Dorsolateral prefrontal cortex (tissue), 120 donors: ENCODE measurements at regions of chr9 and their contacts with region 1.

Region 1: GRCh38 chr9:19925817-19926503 is 137.1 kb upstream of the SLC24A2 start:
- DNase-seq: peak in 9 of 10 donors; percentile 43 to 83 (median 75)
- H3K4me3 ChIP-seq: peak overlapping the region; percentile 25 to 75 (median 58)
- H3K27ac ChIP-seq: peak overlapping the region in 24 of 59 donors; percentile 17 to 76 (median 46)
- H3K27me3 ChIP-seq: no peaks in the 10 kb centered on the region
- CTCF ChIP-seq: peak; percentile 91 to 99 (median 97)

Region 2: DNA sequence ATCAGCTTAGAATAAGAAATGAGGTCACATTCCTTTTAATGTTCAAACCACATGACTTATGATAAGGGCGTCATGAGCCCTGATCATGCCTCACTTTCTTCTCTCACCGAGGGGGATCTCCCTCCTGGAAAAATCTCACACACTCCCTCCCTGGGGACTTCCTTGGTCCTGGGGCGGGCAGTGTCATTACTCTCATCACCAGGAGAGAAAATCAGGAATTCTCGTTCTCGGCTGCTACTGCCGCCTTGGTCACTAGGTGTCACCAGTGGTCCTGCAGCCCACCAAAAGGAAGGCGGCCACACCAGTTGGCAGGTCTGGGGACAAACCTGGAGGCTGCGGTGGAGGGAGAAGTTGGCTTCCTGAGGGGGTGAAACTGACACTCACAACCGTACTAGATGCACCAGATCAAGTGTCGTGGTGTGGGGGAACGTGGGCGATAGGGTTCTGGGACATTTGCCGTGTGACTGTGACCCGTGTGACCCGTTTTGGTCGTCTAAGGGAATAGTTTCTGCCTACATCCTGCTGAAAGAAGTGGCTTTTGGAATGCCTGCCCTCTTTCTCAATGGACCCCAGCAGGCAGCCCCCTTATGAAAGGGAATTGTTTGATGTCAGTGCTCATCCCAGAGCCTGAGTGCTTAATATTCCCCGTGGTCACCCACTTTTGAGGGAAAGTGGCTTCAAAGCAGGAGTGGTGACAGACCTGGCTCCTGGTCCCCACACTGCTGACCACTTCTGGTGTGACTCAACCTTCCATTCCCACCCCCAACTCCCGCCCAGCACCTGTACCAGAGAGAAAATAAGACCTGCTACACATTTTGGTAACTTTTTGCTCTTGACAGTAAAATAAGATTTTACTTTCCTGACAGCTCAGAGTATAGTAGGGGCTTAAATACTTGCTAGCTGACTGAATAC is 454.0 kb before region 1 on chr9:
- intact Hi-C with region 1: loop called (anchors 2 to 5 kb)
- DNase-seq: peak; percentile 61 to 85 (median 82)
- H3K4me3 ChIP-seq: peak overlapping the region in 24 of 59 donors; percentile 2 to 39 (median 18)
- H3K27ac ChIP-seq: peak overlapping the region; percentile 51 to 98 (median 92)
- H3K27me3 ChIP-seq: no peaks in the 10 kb centered on the region
- CTCF ChIP-seq: peak; percentile 38 to 94 (median 84)

Region 3: DNA sequence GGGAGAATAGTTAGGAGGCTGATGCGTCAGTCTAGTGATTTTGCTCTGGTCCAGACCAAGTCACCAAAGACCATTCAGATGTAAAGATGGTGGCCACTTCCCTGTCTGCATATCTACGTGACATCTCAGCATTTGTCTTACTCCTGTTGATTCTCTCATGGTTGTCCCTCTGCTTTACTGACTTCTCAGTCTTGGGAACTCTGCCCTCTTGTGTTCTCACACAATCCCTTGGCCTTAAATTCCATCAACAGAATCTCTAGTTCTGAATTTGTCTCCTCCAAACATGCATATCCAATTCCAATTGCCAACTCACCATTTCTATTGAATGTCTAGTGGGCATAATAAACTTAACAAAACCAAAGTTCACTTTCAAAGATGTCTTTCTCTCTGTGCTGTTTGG is 284.9 kb before region 1 on chr9:
- intact Hi-C with region 1: loop called (anchors 5 to 10 kb)
- DNase-seq: no peak
- H3K4me3 ChIP-seq: no peak overlapping the region
- H3K27ac ChIP-seq: peak overlapping the region in 58 of 59 donors; percentile 51 to 96 (median 86)
- H3K27me3 ChIP-seq: no peaks in the 10 kb centered on the region
- CTCF ChIP-seq: peak in 52 of 56 donors; percentile 11 to 72 (median 43)

Region 4: DNA sequence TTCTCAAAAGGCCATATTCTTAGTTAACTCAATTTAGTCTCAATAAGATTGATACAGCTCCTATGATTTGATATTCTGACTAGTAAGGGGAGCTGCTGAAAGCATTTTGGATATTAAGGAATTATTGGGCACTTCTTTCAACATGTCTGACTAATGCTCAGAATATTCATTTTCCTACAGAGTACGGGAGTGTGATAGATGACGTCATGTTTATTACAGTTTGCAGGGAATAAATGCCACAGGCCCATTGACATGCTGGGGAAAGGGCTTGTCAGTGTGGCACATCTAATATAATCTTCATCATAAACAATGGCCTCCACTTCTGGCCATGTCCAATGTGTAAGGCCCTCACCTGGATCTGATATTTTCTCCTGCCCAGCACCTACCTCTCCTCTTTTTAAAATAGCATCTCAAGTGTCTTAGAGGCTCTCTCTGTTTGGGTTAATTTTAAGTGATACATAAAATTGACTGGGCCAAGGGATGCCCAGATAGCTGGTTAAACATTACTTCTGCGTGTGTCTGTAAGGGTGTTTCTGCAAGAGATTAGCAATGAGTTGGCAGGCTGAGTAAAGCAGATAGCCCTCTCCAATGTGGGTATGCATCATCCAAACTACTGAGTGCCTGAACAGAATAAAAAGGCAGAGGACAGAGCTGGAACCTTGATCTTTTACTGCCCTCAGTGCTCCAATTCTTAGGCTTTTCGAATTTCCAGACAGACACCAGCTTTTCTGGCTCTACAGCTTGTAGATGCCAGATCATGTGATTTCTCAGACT is 236.4 kb before region 1 on chr9:
- intact Hi-C with region 1: loop called in 1 of 2 experiments (anchors 10 kb)
- DNase-seq: no peak
- H3K4me3 ChIP-seq: no peak overlapping the region
- H3K27ac ChIP-seq: peak overlapping the region in 54 of 59 donors; percentile 6 to 99 (median 75)
- H3K27me3 ChIP-seq: no peaks in the 10 kb centered on the region
- CTCF ChIP-seq: no peak

Region 5: GRCh38 chr9:19788614-19789271 is 137.2 kb before region 1 on chr9 and contains the start of gene SLC24A2:
- intact Hi-C with region 1: loop called (anchors 2 to 10 kb)
- DNase-seq: peak; percentile 28 to 86 (median 70)
- H3K4me3 ChIP-seq: peak within 1 kb of the TSS; percentile 53 to 89 (median 77)
- H3K27ac ChIP-seq: peak within 1 kb of the TSS; percentile 60 to 98 (median 95)
- H3K27me3 ChIP-seq: peaks cover 0 to 12% (median 0%) of the 10 kb centered on the region in 45 donors
- CTCF ChIP-seq: peak in 10 of 56 donors; percentile 5 to 41 (median 13)
- total RNA-seq, gene SLC24A2: 72.9 to 391 (median 239) TPM

Region 6: DNA sequence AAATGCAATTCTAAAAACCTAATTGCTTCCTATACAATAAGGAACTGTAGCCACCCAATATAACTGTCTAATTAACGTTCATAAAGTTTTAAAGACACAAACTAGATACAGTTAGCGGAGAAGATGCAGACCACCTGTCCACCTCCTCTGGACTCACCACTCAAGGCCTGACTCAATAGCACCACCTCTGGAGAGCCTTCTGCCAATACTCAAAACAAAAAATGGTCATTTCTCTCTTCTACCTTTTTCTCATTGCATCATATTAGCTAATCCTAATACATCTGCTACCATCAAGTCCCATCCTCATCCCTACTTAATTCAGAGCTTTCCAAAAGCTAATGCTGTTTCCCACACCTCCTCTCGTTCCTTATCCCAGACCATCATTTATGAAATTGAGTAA is 536.5 kb after region 1 on chr9:
- intact Hi-C with region 1: no loop called
- DNase-seq: no peak
- H3K4me3 ChIP-seq: no peak overlapping the region
- H3K27ac ChIP-seq: no peak overlapping the region
- H3K27me3 ChIP-seq: no peaks in the 10 kb centered on the region
- CTCF ChIP-seq: no peak

Region 7: DNA sequence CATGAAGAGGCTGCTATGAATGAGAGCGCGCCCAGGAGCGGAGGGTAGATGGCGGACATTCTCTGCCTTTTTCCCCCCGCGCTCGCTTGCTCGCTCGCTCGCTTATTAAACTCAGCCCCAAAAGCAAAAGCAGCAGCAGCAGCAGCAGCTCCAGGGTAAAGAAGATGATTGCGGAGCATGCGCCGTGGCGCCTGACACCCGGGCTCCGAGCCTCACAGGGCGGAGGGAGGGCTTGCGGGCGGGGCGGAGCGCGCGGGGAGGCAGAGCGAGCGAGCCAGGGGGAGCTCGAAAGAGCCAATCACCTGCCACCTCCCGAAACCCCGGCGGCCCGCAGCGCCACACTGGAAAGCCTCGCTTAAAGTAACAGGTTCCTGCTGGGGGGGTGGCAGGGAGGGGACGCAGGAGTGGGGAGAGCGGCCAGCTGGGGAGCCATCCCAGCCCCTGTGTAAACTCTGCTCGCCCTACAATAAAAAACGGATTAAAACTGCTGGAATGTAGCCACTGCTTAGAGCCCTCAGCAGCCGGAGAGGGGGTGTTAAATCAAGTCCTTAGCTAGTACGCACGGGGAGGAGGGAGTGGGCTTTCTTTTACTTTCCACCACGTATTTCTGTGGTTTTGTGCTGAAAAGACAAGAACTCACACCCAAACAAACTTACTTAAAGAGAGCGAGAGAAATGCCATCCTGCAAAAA is 696.5 kb after region 1 on chr9 and contains the start of gene MLLT3:
- intact Hi-C with region 1: loop called (anchors 5 kb)
- DNase-seq: peak; percentile 94 to 98 (median 96)
- H3K4me3 ChIP-seq: peak within 1 kb of the TSS; percentile 61 to 97 (median 90)
- H3K27ac ChIP-seq: peak within 1 kb of the TSS; percentile 78 to 99 (median 97)
- H3K27me3 ChIP-seq: no peaks in the 10 kb centered on the region
- CTCF ChIP-seq: peak in 50 of 56 donors; percentile 9 to 68 (median 45)
- total RNA-seq, gene MLLT3: 18.6 to 58.3 (median 34.2) TPM

Region 8: DNA sequence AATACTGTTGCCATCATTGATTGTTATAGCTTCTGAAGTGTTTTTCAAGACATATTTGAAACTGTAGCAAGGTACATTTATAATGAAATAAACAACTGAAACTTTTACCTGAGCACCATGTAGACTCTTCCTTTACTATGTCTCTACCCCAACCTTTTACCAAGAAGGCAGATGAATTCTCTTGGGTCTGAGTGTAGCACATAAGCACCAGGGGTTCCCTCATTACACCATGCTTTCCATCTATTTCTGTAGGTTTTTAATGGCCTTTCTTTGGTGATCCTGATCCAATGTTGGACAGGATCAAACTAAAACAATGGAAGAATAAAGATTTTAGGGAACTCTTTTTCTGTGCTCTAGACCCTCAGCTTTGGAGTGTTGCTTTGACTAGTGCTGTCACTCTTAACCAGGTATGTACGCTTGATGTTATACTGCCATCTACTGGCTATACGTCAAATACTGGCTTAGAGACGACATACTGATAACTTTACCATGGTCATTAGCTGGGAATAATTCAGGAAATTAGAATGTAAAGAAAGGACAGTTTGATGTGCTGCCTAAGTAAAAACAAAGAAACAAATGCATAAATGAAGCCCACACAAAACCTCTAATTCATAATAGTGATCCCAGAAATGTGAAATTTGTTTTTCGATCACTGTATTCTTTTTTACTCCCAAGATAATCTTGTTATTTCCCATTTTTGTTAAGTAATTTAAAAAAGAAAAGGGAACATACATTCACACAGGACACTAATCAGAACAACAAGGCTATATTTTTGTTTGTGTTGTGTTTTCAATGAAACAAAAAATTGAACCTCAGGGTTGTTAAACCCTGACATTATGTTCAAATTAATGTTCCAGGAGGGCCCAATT is 1185.0 kb after region 1 on chr9:
- intact Hi-C with region 1: loop called (anchors 5 to 10 kb)
- DNase-seq: peak in 1 of 10 donors; percentile 27
- H3K4me3 ChIP-seq: no peak overlapping the region
- H3K27ac ChIP-seq: no peak overlapping the region
- H3K27me3 ChIP-seq: no peaks in the 10 kb centered on the region
- CTCF ChIP-seq: peak; percentile 50 to 92 (median 82)